ENCODE measurements at regions of chr1 and their contacts with region 1.

Region 1: DNA sequence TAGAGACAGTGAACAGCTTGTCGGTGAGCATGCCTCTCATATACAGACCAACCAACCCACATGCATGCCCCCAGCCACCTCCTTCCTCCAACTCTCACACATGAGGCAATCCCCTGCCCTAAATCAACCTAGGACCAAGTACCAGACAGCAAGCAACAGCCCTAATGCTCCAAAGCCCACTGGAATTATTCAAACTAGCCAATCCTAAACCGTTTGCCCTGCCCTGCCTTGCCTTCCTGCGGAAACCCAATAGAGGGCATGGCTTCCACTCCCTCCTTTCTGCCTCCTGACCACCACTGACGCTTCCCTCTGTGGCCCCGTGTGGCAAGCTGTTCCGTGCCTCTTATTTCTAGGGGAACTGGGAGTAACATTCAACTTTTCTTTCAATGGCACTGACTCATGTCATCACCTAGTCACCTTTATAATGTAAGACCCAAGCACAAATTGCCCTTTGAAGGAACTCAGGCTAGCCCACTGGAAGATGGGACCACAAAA is 129.3 kb upstream of the GJB5 start:
- DNase-seq: no peak
- H3K4me3 ChIP-seq: no peak overlapping the region
- H3K27ac ChIP-seq: no peak overlapping the region
- H3K4me1 ChIP-seq: no peaks in the 10 kb centered on the region
- H3K27me3 ChIP-seq: no peaks in the 10 kb centered on the region
- CTCF ChIP-seq: no peak
- EP300 ChIP-seq: no peak
- POLR2A ChIP-seq: no peak
- RAD21 ChIP-seq: no peak

Region 2: DNA sequence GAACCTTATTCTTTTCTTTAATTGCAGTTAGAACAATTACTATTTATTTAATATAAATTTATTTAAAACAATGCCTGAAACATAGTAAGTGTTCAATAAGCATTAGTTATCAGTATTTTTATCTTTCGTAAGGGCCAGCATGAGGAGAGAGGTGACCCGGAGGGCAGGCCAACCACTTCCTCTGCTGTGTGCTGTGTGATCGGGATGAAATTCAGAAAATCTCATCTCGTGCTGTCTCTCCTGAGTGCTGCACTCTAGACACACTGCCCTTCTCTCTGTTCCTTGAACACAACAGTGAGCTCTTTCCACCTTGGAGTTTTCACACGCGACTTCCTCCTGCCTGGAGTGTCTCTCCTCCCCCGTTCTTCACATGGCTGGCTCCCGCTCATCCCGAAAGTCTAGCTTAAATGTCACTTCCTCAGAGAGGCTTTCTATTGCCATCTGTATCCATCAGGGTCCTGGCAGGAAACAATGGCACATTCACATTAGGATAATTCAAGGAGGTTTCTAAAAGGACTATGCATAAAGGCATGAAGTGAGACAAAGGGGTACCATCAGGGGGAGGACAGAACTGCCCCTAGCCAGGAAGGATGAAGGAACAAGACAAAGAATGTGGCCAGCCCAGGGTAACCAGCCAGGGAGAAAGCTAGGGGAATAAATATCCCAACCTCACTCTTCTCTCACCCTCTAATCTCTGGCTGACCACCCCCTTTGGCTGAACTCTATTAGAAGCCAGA is 13.3 kb before region 1 on chr1:
- CTCF ChIA-PET with region 1: interaction called, 12 read pairs
- POLR2A ChIA-PET with region 1: no interaction called
- DNase-seq: no peak
- H3K4me3 ChIP-seq: no peak overlapping the region
- H3K27ac ChIP-seq: no peak overlapping the region
- H3K4me1 ChIP-seq: peaks cover 0 to 3% (median 0%) of the 10 kb centered on the region in 4 experiments; a peak in 2 of 7 replicates
- H3K27me3 ChIP-seq: peaks cover 0 to 2% (median 0%) of the 10 kb centered on the region in 4 experiments; a peak in 1 of 7 replicates
- CTCF ChIP-seq: no peak
- EP300 ChIP-seq: no peak
- POLR2A ChIP-seq: no peak
- RAD21 ChIP-seq: no peak

Region 3: GRCh38 chr1:34924759-34925555 is 299.4 kb after region 1 on chr1:
- CTCF ChIA-PET with region 1: no interaction called
- POLR2A ChIA-PET with region 1: no interaction called
- DNase-seq: peak in 1 of 2 experiments; percentile 96
- H3K4me3 ChIP-seq: no peak overlapping the region
- H3K27ac ChIP-seq: no peak overlapping the region
- H3K4me1 ChIP-seq: peaks cover 8 to 21% (median 11%) of the 10 kb centered on the region in 4 experiments
- H3K27me3 ChIP-seq: peaks cover 0 to 22% (median 15%) of the 10 kb centered on the region in 4 experiments; a peak in 6 of 7 replicates
- CTCF ChIP-seq: no peak
- EP300 ChIP-seq: peak in 1 of 2 experiments; percentile 83; a peak in 2 of 3 replicates
- POLR2A ChIP-seq: no peak
- RAD21 ChIP-seq: peak in 1 of 2 experiments; percentile 26; a peak in 1 of 4 replicates

Measured in H1 (cell line).